HepG2 (cell line): ENCODE measurements at regions of chr12 and their contacts with region 1.

Region 1: GRCh38 chr12:94149119-94149780 is 873 bp downstream of the PLXNC1 start:
- DNase-seq: no peak
- ATAC-seq: peak; percentile 70
- H3K4me3 ChIP-seq: peak overlapping the region; percentile 64 to 90 (median 76)
- H3K27ac ChIP-seq: peak overlapping the region; percentile 72
- H3K4me1 ChIP-seq: peaks cover 59% of the 10 kb centered on the region
- H3K27me3 ChIP-seq: peaks cover 0 to 12% of the 10 kb centered on the region in 2 experiments; a peak in 2 of 5 replicates
- CTCF ChIP-seq: peak; percentile 85
- EP300 ChIP-seq: no peak
- POLR2A ChIP-seq: no peak
- RAD21 ChIP-seq: peak; percentile 92

Region 2: GRCh38 chr12:94172973-94173372 is 23.7 kb after region 1 on chr12:
- CTCF ChIA-PET with region 1: no interaction called
- POLR2A ChIA-PET with region 1: interaction called, 40 read pairs
- in situ Hi-C with region 1: no loop called
- intact Hi-C with region 1: loop called (anchors 1 kb)
- DNase-seq: peak; percentile 94
- ATAC-seq: peak; percentile 93
- H3K4me3 ChIP-seq: no peak overlapping the region
- H3K27ac ChIP-seq: peak overlapping the region; percentile 59
- H3K4me1 ChIP-seq: peaks cover 60% of the 10 kb centered on the region
- H3K27me3 ChIP-seq: no peaks in the 10 kb centered on the region
- CTCF ChIP-seq: no peak
- EP300 ChIP-seq: peak; percentile 81 to 85
- POLR2A ChIP-seq: no peak
- RAD21 ChIP-seq: no peak

Region 3: GRCh38 chr12:94202245-94203180 is 53.3 kb after region 1 on chr12:
- CTCF ChIA-PET with region 1: no interaction called
- POLR2A ChIA-PET with region 1: interaction called, 22 read pairs
- in situ Hi-C with region 1: no loop called
- intact Hi-C with region 1: loop called (anchors 1 kb)
- DNase-seq: peak; percentile 64
- ATAC-seq: peak; percentile 68
- H3K4me3 ChIP-seq: no peak overlapping the region
- H3K27ac ChIP-seq: peak overlapping the region; percentile 2
- H3K4me1 ChIP-seq: peaks cover 60% of the 10 kb centered on the region
- H3K27me3 ChIP-seq: no peaks in the 10 kb centered on the region
- CTCF ChIP-seq: no peak
- EP300 ChIP-seq: no peak
- POLR2A ChIP-seq: no peak
- RAD21 ChIP-seq: no peak

Region 4: GRCh38 chr12:94277426-94278000 is 128.3 kb after region 1 on chr12:
- CTCF ChIA-PET with region 1: no interaction called
- POLR2A ChIA-PET with region 1: interaction called, 3 read pairs
- in situ Hi-C with region 1: no loop called
- intact Hi-C with region 1: loop called (anchors 5 kb)
- DNase-seq: peak; percentile 46
- ATAC-seq: peak; percentile 90
- H3K4me3 ChIP-seq: no peak overlapping the region
- H3K27ac ChIP-seq: peak overlapping the region; percentile 58
- H3K4me1 ChIP-seq: peaks cover 29% of the 10 kb centered on the region
- H3K27me3 ChIP-seq: no peaks in the 10 kb centered on the region
- CTCF ChIP-seq: no peak
- EP300 ChIP-seq: no peak
- POLR2A ChIP-seq: no peak
- RAD21 ChIP-seq: no peak; the same call in 1 of the 2 replicates

Region 5: GRCh38 chr12:94386422-94386821 is 237.2 kb after region 1 on chr12:
- CTCF ChIA-PET with region 1: no interaction called
- POLR2A ChIA-PET with region 1: no interaction called
- in situ Hi-C with region 1: no loop called
- intact Hi-C with region 1: loop called (anchors 5 kb)
- DNase-seq: peak; percentile 47
- ATAC-seq: peak; percentile 50; the same call in 2 of the 3 replicates
- H3K4me3 ChIP-seq: no peak overlapping the region
- H3K27ac ChIP-seq: no peak overlapping the region
- H3K4me1 ChIP-seq: peaks cover 33% of the 10 kb centered on the region
- H3K27me3 ChIP-seq: no peaks in the 10 kb centered on the region
- CTCF ChIP-seq: no peak
- EP300 ChIP-seq: no peak
- POLR2A ChIP-seq: no peak
- RAD21 ChIP-seq: no peak

Region 6: GRCh38 chr12:94532490-94533422 is 383.5 kb after region 1 on chr12:
- CTCF ChIA-PET with region 1: interaction called, 8 read pairs
- POLR2A ChIA-PET with region 1: no interaction called
- in situ Hi-C with region 1: loop called (anchors 5 kb)
- intact Hi-C with region 1: loop called (anchors 1 kb)
- DNase-seq: peak; percentile 54
- ATAC-seq: peak; percentile 81
- H3K4me3 ChIP-seq: no peak overlapping the region
- H3K27ac ChIP-seq: no peak overlapping the region
- H3K4me1 ChIP-seq: peaks cover 40% of the 10 kb centered on the region
- H3K27me3 ChIP-seq: peaks cover 0 to 3% of the 10 kb centered on the region in 2 experiments; a peak in 1 of 5 replicates
- CTCF ChIP-seq: peak; percentile 91
- EP300 ChIP-seq: no peak
- POLR2A ChIP-seq: no peak
- RAD21 ChIP-seq: peak; percentile 88